CD4-positive, alpha-beta memory T cell (primary cell): ENCODE measurements at regions of chr19 and their contacts with region 1.

Region 1: GRCh38 chr19:57240311-57241090 is at the start of gene ZNF805:
- DNase-seq: peak; percentile 94 to 96 (median 96)
- H3K4me3 ChIP-seq: peak within 1 kb of the TSS; percentile 67 to 71
- H3K4me3 Mint-ChIP-seq: peak within 1 kb of the TSS; percentile 89 to 96 (median 94)
- H3K27ac ChIP-seq: peak within 1 kb of the TSS; percentile 88
- H3K27ac Mint-ChIP-seq: peak within 1 kb of the TSS; percentile 94 to 98 (median 96)
- H3K4me1 ChIP-seq: peaks cover 32% of the 10 kb centered on the region
- H3K4me1 Mint-ChIP-seq: peaks cover 15 to 51% (median 36%) of the 10 kb centered on the region in 4 donors
- H3K27me3 ChIP-seq: no peaks in the 10 kb centered on the region
- H3K27me3 Mint-ChIP-seq: no peaks in the 10 kb centered on the region
- total RNA-seq, gene ZNF805: 19.7 to 21.6 TPM

Region 2: GRCh38 chr19:56140583-56141416 is 1099.7 kb before region 1 on chr19 and contains the start of gene ZNF444:
- CTCF ChIA-PET with region 1: no interaction called
- POLR2A ChIA-PET with region 1: no interaction called
- intact Hi-C with region 1: loop called (anchors 2 kb)
- DNase-seq: peak; percentile 99 to 100 (median 99)
- H3K4me3 ChIP-seq: peak within 1 kb of the TSS; percentile 71 to 96
- H3K4me3 Mint-ChIP-seq: peak within 1 kb of the TSS; percentile 87 to 98 (median 94)
- H3K27ac ChIP-seq: peak within 1 kb of the TSS; percentile 73
- H3K27ac Mint-ChIP-seq: peak within 1 kb of the TSS; percentile 89 to 98 (median 96)
- H3K4me1 ChIP-seq: peaks cover 22% of the 10 kb centered on the region
- H3K4me1 Mint-ChIP-seq: peaks cover 24 to 46% (median 33%) of the 10 kb centered on the region in 4 donors
- H3K27me3 ChIP-seq: no peaks in the 10 kb centered on the region
- H3K27me3 Mint-ChIP-seq: no peaks in the 10 kb centered on the region
- total RNA-seq, gene ZNF444: 33.2 to 42.8 TPM

Region 3: DNA sequence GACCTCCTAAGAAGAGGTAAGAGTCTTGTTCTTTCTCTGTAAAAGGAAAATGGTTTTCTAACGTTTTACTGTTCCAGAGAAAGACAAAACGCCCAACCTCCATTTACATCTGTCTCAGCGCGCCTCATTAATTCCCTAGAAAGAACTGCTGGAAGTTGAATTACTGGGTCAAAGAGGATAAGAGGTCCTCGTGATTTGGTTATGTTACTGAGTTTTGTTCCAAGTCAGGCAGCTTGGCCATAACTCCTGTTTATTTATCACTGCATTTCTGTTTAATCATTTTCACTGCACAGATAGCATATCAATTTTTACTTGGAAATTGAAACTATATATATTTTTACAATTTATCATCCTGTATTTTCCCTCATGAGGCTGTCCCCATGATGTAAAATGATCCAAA is 287.0 kb before region 1 on chr19:
- CTCF ChIA-PET with region 1: no interaction called
- POLR2A ChIA-PET with region 1: no interaction called
- intact Hi-C with region 1: no loop called
- DNase-seq: no peak
- H3K4me3 ChIP-seq: no peak overlapping the region
- H3K4me3 Mint-ChIP-seq: no peak overlapping the region
- H3K27ac ChIP-seq: no peak overlapping the region
- H3K27ac Mint-ChIP-seq: no peak overlapping the region
- H3K4me1 ChIP-seq: no peaks in the 10 kb centered on the region
- H3K4me1 Mint-ChIP-seq: no peaks in the 10 kb centered on the region
- H3K27me3 ChIP-seq: no peaks in the 10 kb centered on the region
- H3K27me3 Mint-ChIP-seq: no peaks in the 10 kb centered on the region

Region 4: DNA sequence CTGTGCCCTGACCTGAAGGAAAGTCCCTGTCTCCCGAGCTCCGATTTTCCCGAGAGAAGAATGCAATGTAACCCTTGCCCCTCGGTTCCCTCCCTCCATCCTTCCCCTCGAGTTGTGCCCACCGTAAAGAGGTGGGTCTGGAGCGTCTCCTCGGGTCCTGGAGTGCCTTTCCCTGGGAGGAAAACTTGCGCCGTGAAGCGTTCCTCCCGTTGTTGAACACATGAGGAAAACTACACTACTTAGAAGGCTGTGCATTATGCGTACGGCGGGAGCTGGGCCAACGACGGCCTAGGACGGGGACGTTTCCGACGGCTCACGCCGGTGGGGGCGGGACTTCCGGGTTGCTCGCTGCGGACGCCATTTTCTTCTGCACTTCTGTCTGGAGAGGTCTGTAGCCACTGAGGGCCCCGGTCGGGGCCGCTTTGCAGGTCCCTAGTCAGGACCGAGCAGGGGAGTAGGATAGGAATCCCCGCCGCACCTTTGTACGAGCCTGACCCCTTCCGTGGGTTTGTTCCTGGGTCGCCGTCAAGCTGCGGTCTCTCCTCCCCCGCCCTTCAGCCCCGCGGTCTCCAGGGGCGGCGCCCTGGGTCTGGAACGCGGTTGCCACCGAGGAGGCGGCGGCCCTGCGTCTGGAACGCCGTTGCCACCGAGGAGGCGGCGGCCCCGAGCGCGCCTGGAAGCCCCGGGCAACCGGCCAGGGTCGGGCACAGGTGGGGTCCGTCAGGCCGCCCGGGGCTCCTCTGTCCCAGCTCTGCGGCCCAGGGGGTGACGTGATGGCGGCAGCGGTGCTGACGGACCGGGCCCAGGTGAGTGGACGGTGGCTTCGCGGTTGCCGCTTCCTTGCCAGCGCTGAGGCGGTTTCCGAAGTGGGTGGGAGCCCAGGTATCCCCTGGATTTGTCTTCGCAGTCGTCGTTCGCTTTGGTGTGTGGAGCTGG is 49.1 kb before region 1 on chr19 and contains the start of gene ZNF264:
- CTCF ChIA-PET with region 1: no interaction called
- POLR2A ChIA-PET with region 1: interaction called, 11 read pairs
- intact Hi-C with region 1: loop called (anchors 1 kb)
- DNase-seq: peak; percentile 88 to 90 (median 88)
- H3K4me3 ChIP-seq: peak within 1 kb of the TSS; percentile 57 to 73
- H3K4me3 Mint-ChIP-seq: peak within 1 kb of the TSS; percentile 91 to 94 (median 93)
- H3K27ac ChIP-seq: peak within 1 kb of the TSS; percentile 77
- H3K27ac Mint-ChIP-seq: peak within 1 kb of the TSS; percentile 94 to 98 (median 96)
- H3K4me1 ChIP-seq: peaks cover 23% of the 10 kb centered on the region
- H3K4me1 Mint-ChIP-seq: peaks cover 19 to 54% (median 36%) of the 10 kb centered on the region in 4 donors
- H3K27me3 ChIP-seq: no peaks in the 10 kb centered on the region
- H3K27me3 Mint-ChIP-seq: peaks cover 6 to 7% of the 10 kb centered on the region in 2 donors
- total RNA-seq, gene ZNF264: 62.5 to 64.1 TPM

Region 5: DNA sequence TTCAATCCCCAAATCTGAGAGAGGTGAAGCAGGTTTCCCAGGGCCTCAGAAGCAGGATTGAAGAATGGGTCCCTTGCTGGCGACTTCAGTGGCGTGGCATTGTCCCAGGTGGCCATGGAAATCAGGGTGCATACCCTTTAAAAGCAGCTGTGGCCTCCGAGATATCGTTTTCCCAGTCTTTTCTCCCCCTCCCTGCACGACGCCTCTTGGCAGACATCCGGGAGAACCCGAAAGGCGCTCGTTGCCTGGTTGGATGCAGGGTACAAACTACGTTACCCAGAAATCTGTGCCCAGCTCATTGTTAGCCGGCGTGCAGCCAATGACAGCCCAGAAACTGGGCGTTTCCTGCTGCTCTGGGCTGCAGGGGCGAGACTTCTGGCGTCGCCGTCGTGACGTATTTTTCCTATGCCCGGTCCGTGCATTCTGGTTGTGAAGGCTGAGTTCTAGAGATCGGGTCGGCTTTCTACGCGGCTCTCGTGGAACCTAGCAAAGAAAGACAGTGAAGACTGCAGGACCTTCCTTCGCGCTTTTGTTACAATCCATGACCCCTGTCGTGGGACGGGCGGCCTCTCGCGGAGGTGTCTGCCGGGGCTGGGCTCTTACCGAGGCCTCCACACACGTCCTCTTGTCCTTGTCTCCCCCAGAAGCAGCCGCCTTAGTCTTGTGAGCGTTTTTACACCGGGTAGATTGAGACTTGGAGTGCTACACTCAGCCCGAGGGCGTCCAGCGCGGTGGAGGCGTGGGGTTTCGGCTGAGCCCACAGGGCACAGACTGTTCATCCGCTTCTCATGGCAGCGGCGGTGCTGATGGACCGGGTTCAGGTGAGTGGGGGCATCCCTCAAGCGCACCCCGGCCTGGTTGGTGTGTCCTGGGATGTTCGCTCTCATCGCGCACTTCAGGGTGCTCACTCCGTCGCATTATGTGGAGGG is 110.6 kb after region 1 on chr19 and contains the start of gene ZNF304:
- CTCF ChIA-PET with region 1: no interaction called
- POLR2A ChIA-PET with region 1: interaction called, 6 read pairs
- intact Hi-C with region 1: loop called (anchors 2 kb)
- DNase-seq: peak; percentile 78 to 85 (median 84)
- H3K4me3 ChIP-seq: peak within 1 kb of the TSS; percentile 43 to 93
- H3K4me3 Mint-ChIP-seq: peak within 1 kb of the TSS; percentile 94 to 99 (median 96)
- H3K27ac ChIP-seq: peak within 1 kb of the TSS; percentile 73
- H3K27ac Mint-ChIP-seq: peak within 1 kb of the TSS; percentile 83 to 97 (median 96)
- H3K4me1 ChIP-seq: peaks cover 20% of the 10 kb centered on the region
- H3K4me1 Mint-ChIP-seq: peaks cover 28 to 39% (median 31%) of the 10 kb centered on the region in 4 donors
- H3K27me3 ChIP-seq: no peaks in the 10 kb centered on the region
- H3K27me3 Mint-ChIP-seq: peaks cover 2% of the 10 kb centered on the region in 2 donors
- total RNA-seq, gene ZNF304: 13.3 to 13.6 TPM

Region 6: GRCh38 chr19:57527136-57527881 is 286.8 kb after region 1 on chr19 and contains the start of gene ZNF549:
- CTCF ChIA-PET with region 1: no interaction called
- POLR2A ChIA-PET with region 1: no interaction called
- intact Hi-C with region 1: loop called (anchors 1 kb)
- DNase-seq: peak; percentile 88 to 93 (median 90)
- H3K4me3 ChIP-seq: peak within 1 kb of the TSS; percentile 15 to 99
- H3K4me3 Mint-ChIP-seq: peak within 1 kb of the TSS; percentile 86 to 98 (median 92)
- H3K27ac ChIP-seq: peak within 1 kb of the TSS; percentile 79
- H3K27ac Mint-ChIP-seq: peak within 1 kb of the TSS; percentile 86 to 97 (median 92)
- H3K4me1 ChIP-seq: peaks cover 16% of the 10 kb centered on the region
- H3K4me1 Mint-ChIP-seq: peaks cover 16 to 31% (median 22%) of the 10 kb centered on the region in 4 donors
- H3K27me3 ChIP-seq: no peaks in the 10 kb centered on the region
- H3K27me3 Mint-ChIP-seq: peaks cover 0 to 4% of the 10 kb centered on the region in 2 donors
- total RNA-seq, gene ZNF549: 20.5 to 21.8 TPM